ENCODE measurements at regions of chr7 and their contacts with region 1.

Region 1: GRCh38 chr7:108452722-108453121 is 3.5 kb downstream of the NRCAM start:
- DNase-seq: peak; percentile 54
- ATAC-seq: peak; percentile 62
- H3K4me3 ChIP-seq: no peak overlapping the region
- H3K4me3 Mint-ChIP-seq: peak overlapping the region; percentile 12
- H3K27ac ChIP-seq: no peak overlapping the region
- H3K27ac Mint-ChIP-seq: no peak overlapping the region
- H3K4me1 ChIP-seq: peaks cover 20 to 30% of the 10 kb centered on the region in 2 donors
- H3K4me1 Mint-ChIP-seq: peaks cover 31% of the 10 kb centered on the region
- H3K27me3 ChIP-seq: peaks cover 0 to 38% (median 29%) of the 10 kb centered on the region in 4 experiments
- H3K27me3 Mint-ChIP-seq: peaks cover 32% of the 10 kb centered on the region
- CTCF ChIP-seq: peak; percentile 82

Region 2: DNA sequence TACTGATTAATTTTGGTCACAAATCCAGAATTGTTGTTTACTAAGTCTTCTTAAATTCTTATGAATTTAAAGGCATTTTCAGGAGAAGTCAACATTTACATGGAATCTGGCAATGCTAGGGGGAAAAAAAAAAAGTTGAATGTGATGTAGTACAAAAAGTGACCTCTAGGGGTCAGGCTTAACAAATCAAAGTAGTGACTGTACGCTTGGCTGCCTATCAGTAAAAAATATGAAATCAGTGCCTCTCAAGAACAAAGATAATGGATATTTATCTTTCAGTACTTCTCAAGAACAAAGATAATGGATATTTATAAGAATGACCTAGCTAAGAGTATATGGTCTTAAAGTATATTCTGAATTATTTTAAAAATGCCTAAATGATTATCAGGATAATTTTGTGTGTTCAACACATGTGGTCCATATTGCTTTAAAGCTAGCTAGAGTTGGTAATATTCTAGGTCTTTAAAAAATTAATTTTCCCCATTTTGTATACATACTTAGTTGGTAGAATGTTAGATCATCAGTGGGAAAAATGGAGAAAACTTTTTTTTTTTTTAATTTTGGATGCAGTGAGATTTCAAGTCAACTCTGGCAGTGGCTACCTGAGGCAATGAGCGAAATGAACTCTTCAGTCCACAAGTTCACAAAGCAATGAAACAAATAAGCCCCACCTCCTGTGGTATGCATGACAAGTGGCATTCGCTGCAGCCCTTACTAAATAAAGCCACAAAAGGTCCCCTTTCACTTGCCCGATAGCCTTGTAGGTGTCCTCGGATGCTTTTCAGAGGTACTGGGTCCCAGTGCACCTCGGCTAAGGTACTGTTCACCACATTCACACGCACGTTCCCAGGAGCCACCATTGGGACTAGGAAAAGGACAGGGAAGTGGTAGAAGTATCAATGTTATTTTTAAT is 271.4 kb before region 1 on chr7:
- CTCF ChIA-PET with region 1: interaction called, 11 read pairs
- POLR2A ChIA-PET with region 1: no interaction called
- intact Hi-C with region 1: no loop called
- DNase-seq: peak; percentile 71
- ATAC-seq: peak; percentile 66
- H3K4me3 ChIP-seq: no peak overlapping the region
- H3K4me3 Mint-ChIP-seq: no peak overlapping the region
- H3K27ac ChIP-seq: no peak overlapping the region
- H3K27ac Mint-ChIP-seq: no peak overlapping the region
- H3K4me1 ChIP-seq: no peaks in the 10 kb centered on the region
- H3K4me1 Mint-ChIP-seq: no peaks in the 10 kb centered on the region
- H3K27me3 ChIP-seq: peaks cover 0 to 3% (median 0%) of the 10 kb centered on the region in 4 experiments
- H3K27me3 Mint-ChIP-seq: peaks cover 6% of the 10 kb centered on the region
- CTCF ChIP-seq: peak; percentile 90

Region 3: DNA sequence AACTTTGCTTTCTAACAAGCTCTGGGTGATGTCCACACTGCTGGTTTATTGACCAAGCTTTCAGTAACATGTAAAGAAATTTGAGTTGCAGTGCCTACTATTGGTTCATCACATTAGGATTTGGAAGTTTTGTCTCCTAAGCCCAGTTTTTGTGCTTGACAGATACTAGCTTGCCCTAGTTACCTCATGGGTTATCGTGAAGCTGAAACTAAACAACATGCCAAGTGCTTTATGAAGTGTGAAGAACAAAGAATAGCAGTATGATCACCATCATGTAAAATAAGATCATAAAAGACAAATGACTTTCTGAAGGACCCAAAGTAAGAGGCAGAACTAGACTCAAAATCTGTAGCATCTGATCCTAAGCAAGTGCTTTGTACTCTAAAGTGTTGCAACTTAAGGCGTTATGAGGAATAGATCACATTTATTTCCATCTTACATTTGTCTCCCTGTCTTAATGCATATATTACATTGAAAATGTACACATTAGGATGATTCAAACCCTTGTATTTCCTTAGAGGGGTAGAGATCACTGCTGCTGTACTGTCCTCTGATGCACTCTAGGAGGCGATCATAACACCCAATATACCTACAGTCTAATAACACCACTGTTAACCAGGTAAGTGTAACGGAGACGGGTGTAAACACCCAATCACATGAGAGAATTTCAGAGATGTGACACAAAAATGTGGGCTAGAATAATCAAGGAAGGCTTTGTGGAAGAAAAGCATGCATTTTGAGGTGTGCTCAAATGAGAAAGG is 67.8 kb before region 1 on chr7:
- CTCF ChIA-PET with region 1: interaction called, 7 read pairs
- POLR2A ChIA-PET with region 1: no interaction called
- intact Hi-C with region 1: loop called (anchors 5 kb)
- DNase-seq: peak; percentile 25
- ATAC-seq: peak; percentile 73
- H3K4me3 ChIP-seq: no peak overlapping the region
- H3K4me3 Mint-ChIP-seq: no peak overlapping the region
- H3K27ac ChIP-seq: no peak overlapping the region
- H3K27ac Mint-ChIP-seq: no peak overlapping the region
- H3K4me1 ChIP-seq: peaks cover 0 to 4% of the 10 kb centered on the region in 2 donors
- H3K4me1 Mint-ChIP-seq: peaks cover 18% of the 10 kb centered on the region
- H3K27me3 ChIP-seq: peaks cover 0 to 2% (median 0%) of the 10 kb centered on the region in 4 experiments
- H3K27me3 Mint-ChIP-seq: no peaks in the 10 kb centered on the region
- CTCF ChIP-seq: peak; percentile 52

Region 4: GRCh38 chr7:108442039-108442568 is 10.6 kb before region 1 on chr7:
- CTCF ChIA-PET with region 1: interaction called, 11 read pairs
- POLR2A ChIA-PET with region 1: no interaction called
- intact Hi-C with region 1: no loop called
- DNase-seq: no peak
- ATAC-seq: no peak
- H3K4me3 ChIP-seq: no peak overlapping the region
- H3K4me3 Mint-ChIP-seq: no peak overlapping the region
- H3K27ac ChIP-seq: no peak overlapping the region
- H3K27ac Mint-ChIP-seq: no peak overlapping the region
- H3K4me1 ChIP-seq: no peaks in the 10 kb centered on the region
- H3K4me1 Mint-ChIP-seq: no peaks in the 10 kb centered on the region
- H3K27me3 ChIP-seq: peaks cover 0 to 7% (median 3%) of the 10 kb centered on the region in 4 experiments
- H3K27me3 Mint-ChIP-seq: peaks cover 19% of the 10 kb centered on the region
- CTCF ChIP-seq: no peak

Region 5: DNA sequence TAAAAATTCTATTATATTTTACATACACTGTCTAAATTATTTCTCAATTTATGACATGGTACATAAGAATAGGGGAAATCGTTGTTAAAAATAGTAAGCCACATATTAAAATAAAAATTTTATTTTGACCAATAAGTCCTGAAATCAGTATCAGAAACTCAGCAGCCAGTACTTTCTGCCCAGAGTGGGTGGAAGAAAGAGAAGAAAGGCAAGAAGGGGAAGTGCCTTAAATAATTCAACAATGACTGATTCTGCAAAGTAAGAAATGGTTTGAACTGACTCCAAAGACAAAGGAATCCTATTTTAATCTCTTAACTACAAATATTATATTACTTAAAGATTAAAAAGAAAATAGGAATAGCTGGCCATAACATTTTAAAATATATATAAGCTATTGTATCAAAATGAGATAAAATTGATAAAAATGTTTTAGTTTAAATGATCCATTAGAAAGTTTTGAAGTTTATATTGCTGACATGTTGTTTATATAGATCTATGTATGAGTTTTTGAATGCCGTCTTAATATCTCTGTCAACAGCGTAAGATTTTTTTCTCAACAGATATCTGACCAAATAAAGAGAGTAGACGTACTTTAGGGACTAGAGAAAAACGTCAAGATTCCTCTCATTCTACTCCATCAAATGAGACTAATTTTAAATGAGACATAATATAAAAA is 33.7 kb after region 1 on chr7:
- CTCF ChIA-PET with region 1: interaction called, 11 read pairs
- POLR2A ChIA-PET with region 1: no interaction called
- intact Hi-C with region 1: no loop called
- DNase-seq: no peak
- ATAC-seq: no peak
- H3K4me3 ChIP-seq: no peak overlapping the region
- H3K4me3 Mint-ChIP-seq: no peak overlapping the region
- H3K27ac ChIP-seq: no peak overlapping the region
- H3K27ac Mint-ChIP-seq: no peak overlapping the region
- H3K4me1 ChIP-seq: peaks cover 0 to 3% of the 10 kb centered on the region in 2 donors
- H3K4me1 Mint-ChIP-seq: peaks cover 6% of the 10 kb centered on the region
- H3K27me3 ChIP-seq: no peaks in the 10 kb centered on the region
- H3K27me3 Mint-ChIP-seq: no peaks in the 10 kb centered on the region
- CTCF ChIP-seq: no peak

Region 6: DNA sequence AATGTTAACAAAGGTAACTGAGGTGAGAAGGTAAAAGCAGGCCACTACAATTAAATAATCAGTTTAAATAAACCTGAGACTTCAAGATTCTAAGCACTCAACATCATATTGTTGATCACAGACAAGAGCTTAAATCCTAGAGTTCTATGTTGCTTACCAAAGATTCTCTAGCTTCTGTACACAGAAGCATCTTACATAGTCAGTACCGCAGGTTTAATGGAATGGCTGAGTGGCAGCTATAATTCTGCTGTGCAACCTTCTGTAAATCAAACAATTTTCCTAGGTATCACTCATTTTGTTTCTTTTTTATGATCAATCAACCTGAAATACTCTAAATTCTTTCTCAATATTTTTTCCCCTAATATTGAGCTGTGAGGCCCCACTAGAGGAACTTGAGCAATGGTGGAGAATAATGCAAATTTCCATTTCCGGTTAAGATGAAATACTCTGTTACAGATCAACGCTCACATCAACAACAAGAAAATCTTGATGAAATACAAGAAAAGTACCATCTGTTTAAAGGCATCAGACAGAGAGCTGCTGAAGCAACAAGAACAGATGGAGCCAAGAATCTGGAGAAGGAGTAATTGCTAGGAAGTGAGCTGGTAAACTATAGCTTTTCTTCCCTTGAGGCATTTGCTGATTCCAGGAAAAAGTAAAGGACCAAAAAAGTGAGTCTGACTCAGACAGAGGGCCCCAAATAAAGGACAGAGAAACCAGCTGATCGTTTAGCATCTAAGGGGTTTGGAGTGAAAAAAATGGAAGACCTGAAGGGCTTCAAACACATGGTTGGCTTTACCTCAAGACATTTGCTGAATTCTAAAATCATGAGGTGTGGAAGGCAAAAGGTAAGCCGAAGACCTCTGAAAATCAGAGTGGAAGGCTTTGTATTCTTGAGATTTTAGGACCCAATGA is 50.6 kb after region 1 on chr7:
- CTCF ChIA-PET with region 1: interaction called, 58 read pairs
- POLR2A ChIA-PET with region 1: no interaction called
- intact Hi-C with region 1: no loop called
- DNase-seq: peak; percentile 81
- ATAC-seq: peak; percentile 94
- H3K4me3 ChIP-seq: peak overlapping the region; percentile 29 to 51 (median 40)
- H3K4me3 Mint-ChIP-seq: peak overlapping the region; percentile 90
- H3K27ac ChIP-seq: peak overlapping the region; percentile 91 to 95
- H3K27ac Mint-ChIP-seq: peak overlapping the region; percentile 100
- H3K4me1 ChIP-seq: peaks cover 37 to 40% of the 10 kb centered on the region in 2 donors
- H3K4me1 Mint-ChIP-seq: peaks cover 51% of the 10 kb centered on the region
- H3K27me3 ChIP-seq: no peaks in the 10 kb centered on the region
- H3K27me3 Mint-ChIP-seq: no peaks in the 10 kb centered on the region
- CTCF ChIP-seq: no peak